B cell (primary cell): ENCODE measurements at regions of chr22 and their contacts with region 1.

Region 1: GRCh38 chr22:36775964-36776669 is at the start of gene IFT27:
- DNase-seq: peak; percentile 99
- ATAC-seq: peak; percentile 87
- H3K4me3 ChIP-seq: peak within 1 kb of the TSS; percentile 60 to 82 (median 73)
- H3K4me3 Mint-ChIP-seq: peak within 1 kb of the TSS; percentile 96
- H3K27ac ChIP-seq: peak within 1 kb of the TSS; percentile 80 to 91
- H3K27ac Mint-ChIP-seq: peak within 1 kb of the TSS; percentile 95
- H3K4me1 ChIP-seq: peaks cover 13 to 17% of the 10 kb centered on the region in 2 donors
- H3K4me1 Mint-ChIP-seq: peaks cover 16% of the 10 kb centered on the region
- H3K27me3 ChIP-seq: no peaks in the 10 kb centered on the region
- H3K27me3 Mint-ChIP-seq: no peaks in the 10 kb centered on the region
- CTCF ChIP-seq: no peak
- total RNA-seq, gene IFT27: 40.3 and 42.8 TPM in 2 replicates

Region 2: GRCh38 chr22:35299673-35300497 is 1476.2 kb before region 1 on chr22 and contains the start of gene TOM1:
- CTCF ChIA-PET with region 1: no interaction called
- POLR2A ChIA-PET with region 1: no interaction called
- intact Hi-C with region 1: loop called (anchors 5 kb)
- DNase-seq: peak; percentile 100
- ATAC-seq: peak; percentile 90
- H3K4me3 ChIP-seq: peak within 1 kb of the TSS; percentile 61 to 94 (median 73)
- H3K4me3 Mint-ChIP-seq: peak within 1 kb of the TSS; percentile 93
- H3K27ac ChIP-seq: peak within 1 kb of the TSS; percentile 96 to 97
- H3K27ac Mint-ChIP-seq: peak within 1 kb of the TSS; percentile 98
- H3K4me1 ChIP-seq: peaks cover 5 to 22% of the 10 kb centered on the region in 2 donors
- H3K4me1 Mint-ChIP-seq: peaks cover 26% of the 10 kb centered on the region
- H3K27me3 ChIP-seq: no peaks in the 10 kb centered on the region
- H3K27me3 Mint-ChIP-seq: no peaks in the 10 kb centered on the region
- CTCF ChIP-seq: no peak
- total RNA-seq, gene TOM1: 53.2 and 54.2 TPM in 2 replicates

Region 3: DNA sequence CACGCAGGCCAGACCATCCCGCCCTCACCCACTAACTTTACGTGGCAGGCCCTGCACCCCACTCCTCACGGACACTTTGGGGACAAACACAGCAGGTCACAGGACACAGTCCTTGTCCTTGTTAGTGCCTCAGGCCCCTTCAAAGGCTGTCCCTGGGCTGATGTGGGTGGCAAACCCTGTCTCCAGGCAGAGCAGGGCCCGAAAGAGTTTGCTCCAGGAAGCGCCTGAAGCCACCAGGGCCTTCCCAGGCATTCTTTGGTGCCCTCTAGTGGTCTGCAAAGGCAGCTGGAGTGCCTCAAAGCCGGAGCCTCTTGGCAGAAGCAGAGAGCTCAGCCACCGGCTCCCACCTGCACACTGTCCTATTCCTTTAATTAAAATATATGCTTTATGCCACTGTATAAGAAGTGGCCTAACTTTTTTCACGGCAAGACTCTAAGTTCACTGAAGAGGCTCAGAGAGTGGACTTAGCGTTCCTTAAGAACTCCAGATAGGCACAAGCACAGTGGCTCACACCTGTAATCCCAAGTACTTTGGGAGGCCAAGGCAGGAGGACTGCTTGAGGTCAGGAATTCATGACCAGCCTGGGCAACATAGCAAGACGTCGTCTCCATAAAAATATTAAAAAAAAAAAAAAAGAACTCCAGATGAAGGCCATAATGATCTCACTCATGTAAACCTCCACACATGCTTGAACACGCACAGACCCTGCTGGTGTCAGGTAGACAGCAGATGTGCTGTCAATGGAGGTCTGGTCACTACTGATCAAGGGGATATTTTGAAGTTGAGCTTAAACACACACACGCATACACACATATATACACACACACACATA is 305.7 kb before region 1 on chr22:
- CTCF ChIA-PET with region 1: no interaction called
- POLR2A ChIA-PET with region 1: no interaction called
- intact Hi-C with region 1: no loop called
- DNase-seq: peak; percentile 88
- ATAC-seq: peak; percentile 93
- H3K4me3 ChIP-seq: no peak overlapping the region
- H3K4me3 Mint-ChIP-seq: no peak overlapping the region
- H3K27ac ChIP-seq: no peak overlapping the region
- H3K27ac Mint-ChIP-seq: peak overlapping the region; percentile 72
- H3K4me1 ChIP-seq: peaks cover 6 to 17% of the 10 kb centered on the region in 2 donors
- H3K4me1 Mint-ChIP-seq: peaks cover 14% of the 10 kb centered on the region
- H3K27me3 ChIP-seq: no peaks in the 10 kb centered on the region
- H3K27me3 Mint-ChIP-seq: no peaks in the 10 kb centered on the region
- CTCF ChIP-seq: peak; percentile 96

Region 4: GRCh38 chr22:36528795-36529751 is 247.0 kb before region 1 on chr22 and contains the start of gene EIF3D:
- CTCF ChIA-PET with region 1: interaction called, 3 read pairs
- POLR2A ChIA-PET with region 1: interaction called, 6 read pairs
- intact Hi-C with region 1: loop called (anchors 1 kb)
- DNase-seq: peak; percentile 100
- ATAC-seq: peak; percentile 92
- H3K4me3 ChIP-seq: peak within 1 kb of the TSS; percentile 80 to 97 (median 88)
- H3K4me3 Mint-ChIP-seq: peak within 1 kb of the TSS; percentile 98
- H3K27ac ChIP-seq: peak within 1 kb of the TSS; percentile 88 to 93
- H3K27ac Mint-ChIP-seq: peak within 1 kb of the TSS; percentile 98
- H3K4me1 ChIP-seq: peaks cover 13 to 24% of the 10 kb centered on the region in 2 donors
- H3K4me1 Mint-ChIP-seq: peaks cover 28% of the 10 kb centered on the region
- H3K27me3 ChIP-seq: no peaks in the 10 kb centered on the region
- H3K27me3 Mint-ChIP-seq: no peaks in the 10 kb centered on the region
- CTCF ChIP-seq: no peak
- total RNA-seq, gene EIF3D: 257 and 274 TPM in 2 replicates

Region 5: DNA sequence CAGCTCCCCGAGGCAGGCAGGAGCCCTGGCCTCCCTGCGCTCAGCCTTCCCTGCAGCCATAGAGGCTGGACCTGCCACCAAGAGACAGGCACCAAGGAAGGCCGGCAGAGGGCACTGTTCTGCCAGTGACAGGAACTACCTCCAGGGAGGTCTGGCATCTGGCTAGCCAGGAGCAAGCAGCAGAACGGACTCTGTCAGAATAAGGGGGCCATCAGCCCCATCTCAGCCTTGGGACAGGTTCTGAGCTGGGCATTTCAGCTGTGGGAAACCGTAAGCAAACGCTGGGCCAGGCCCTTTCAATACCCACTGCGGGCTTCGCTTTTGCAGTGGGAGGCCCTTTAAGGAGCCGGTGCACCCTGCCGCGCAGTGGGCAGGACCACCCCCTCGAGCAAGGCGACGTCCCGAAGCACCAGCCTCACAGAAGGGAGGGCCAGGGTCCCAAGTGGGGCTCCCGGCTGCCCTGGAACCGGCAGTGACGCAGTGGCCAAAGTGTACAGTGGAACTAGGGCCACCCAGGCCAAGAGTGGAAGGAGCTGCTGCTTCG is 18.4 kb before region 1 on chr22:
- CTCF ChIA-PET with region 1: interaction called, 27 read pairs
- POLR2A ChIA-PET with region 1: interaction called, 4 read pairs
- intact Hi-C with region 1: no loop called
- DNase-seq: peak; percentile 77
- ATAC-seq: peak; percentile 93
- H3K4me3 ChIP-seq: no peak overlapping the region
- H3K4me3 Mint-ChIP-seq: no peak overlapping the region
- H3K27ac ChIP-seq: no peak overlapping the region
- H3K27ac Mint-ChIP-seq: no peak overlapping the region
- H3K4me1 ChIP-seq: no peaks in the 10 kb centered on the region
- H3K4me1 Mint-ChIP-seq: no peaks in the 10 kb centered on the region
- H3K27me3 ChIP-seq: peaks cover 0 to 20% (median 1%) of the 10 kb centered on the region in 4 experiments
- H3K27me3 Mint-ChIP-seq: peaks cover 18% of the 10 kb centered on the region
- CTCF ChIP-seq: peak; percentile 84

Region 6: GRCh38 chr22:36828815-36829214 is 52.7 kb after region 1 on chr22:
- CTCF ChIA-PET with region 1: no interaction called
- POLR2A ChIA-PET with region 1: no interaction called
- intact Hi-C with region 1: no loop called
- DNase-seq: no peak
- ATAC-seq: no peak
- H3K4me3 ChIP-seq: no peak overlapping the region
- H3K4me3 Mint-ChIP-seq: no peak overlapping the region
- H3K27ac ChIP-seq: no peak overlapping the region
- H3K27ac Mint-ChIP-seq: no peak overlapping the region
- H3K4me1 ChIP-seq: peaks cover 10 to 14% of the 10 kb centered on the region in 2 donors
- H3K4me1 Mint-ChIP-seq: peaks cover 15% of the 10 kb centered on the region
- H3K27me3 ChIP-seq: peaks cover 0 to 21% (median 10%) of the 10 kb centered on the region in 4 experiments
- H3K27me3 Mint-ChIP-seq: peaks cover 31% of the 10 kb centered on the region
- CTCF ChIP-seq: no peak

Region 7: DNA sequence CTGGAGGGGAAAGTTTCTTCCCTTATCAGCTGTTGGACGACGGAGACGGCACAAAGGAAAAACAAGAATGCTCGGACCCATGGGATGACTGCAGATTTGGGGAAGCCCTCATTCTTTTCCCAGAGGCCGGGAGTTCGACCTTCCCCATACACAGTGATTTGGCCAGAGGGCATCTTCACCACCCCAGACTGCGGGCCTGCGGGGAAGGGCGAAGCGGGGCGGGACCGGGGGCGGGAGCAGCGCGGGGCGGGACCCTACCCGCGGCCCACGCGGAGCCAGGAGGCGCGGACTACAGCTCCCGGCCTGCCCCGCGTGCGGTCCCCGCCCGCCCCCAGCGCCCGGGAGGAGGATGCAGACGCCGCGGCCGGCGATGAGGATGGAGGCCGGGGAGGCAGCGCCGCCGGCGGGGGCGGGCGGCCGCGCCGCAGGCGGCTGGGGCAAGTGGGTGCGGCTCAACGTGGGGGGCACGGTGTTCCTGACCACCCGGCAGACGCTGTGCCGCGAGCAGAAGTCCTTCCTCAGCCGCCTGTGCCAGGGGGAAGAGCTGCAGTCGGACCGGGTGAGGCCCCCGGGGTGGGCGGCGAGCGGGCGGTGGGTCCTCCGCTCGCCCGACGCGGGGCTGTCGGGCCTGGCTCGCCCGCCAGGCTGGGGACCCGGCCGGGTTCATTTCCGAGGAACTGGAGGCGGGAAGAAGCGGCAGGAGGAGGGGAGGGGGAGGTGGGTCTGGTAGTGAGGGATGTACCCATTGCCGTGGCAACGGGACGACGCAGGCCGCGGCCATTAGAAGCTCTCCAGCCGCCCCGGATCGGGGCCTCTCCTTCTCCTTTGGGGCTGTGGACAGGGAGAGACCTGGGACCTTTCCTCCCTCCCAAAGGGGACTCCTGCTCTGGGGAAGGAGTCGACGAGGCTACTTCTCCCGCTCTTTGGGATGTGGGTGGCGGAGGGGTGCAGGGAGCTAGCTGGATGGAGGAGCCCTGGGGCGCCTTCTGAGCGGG is 275.6 kb after region 1 on chr22 and contains the start of gene KCTD17:
- CTCF ChIA-PET with region 1: no interaction called
- POLR2A ChIA-PET with region 1: no interaction called
- intact Hi-C with region 1: loop called (anchors 1 kb)
- DNase-seq: peak; percentile 78
- ATAC-seq: peak; percentile 100
- H3K4me3 ChIP-seq: peak within 1 kb of the TSS in 4 of 5 experiments; percentile 40 to 71 (median 60)
- H3K4me3 Mint-ChIP-seq: peak within 1 kb of the TSS; percentile 85
- H3K27ac ChIP-seq: peak within 1 kb of the TSS in 1 of 2 donors; percentile 36
- H3K27ac Mint-ChIP-seq: peak within 1 kb of the TSS; percentile 39
- H3K4me1 ChIP-seq: peaks cover 7 to 18% of the 10 kb centered on the region in 2 donors
- H3K4me1 Mint-ChIP-seq: peaks cover 12% of the 10 kb centered on the region
- H3K27me3 ChIP-seq: no peaks in the 10 kb centered on the region
- H3K27me3 Mint-ChIP-seq: no peaks in the 10 kb centered on the region
- CTCF ChIP-seq: no peak
- total RNA-seq, gene KCTD17: 40.0 and 41.3 TPM in 2 replicates

Region 8: GRCh38 chr22:37486224-37486845 is 710.2 kb after region 1 on chr22 and contains the start of gene MFNG:
- CTCF ChIA-PET with region 1: no interaction called
- POLR2A ChIA-PET with region 1: no interaction called
- intact Hi-C with region 1: loop called (anchors 10 kb)
- DNase-seq: peak; percentile 86
- ATAC-seq: peak; percentile 78
- H3K4me3 ChIP-seq: peak within 1 kb of the TSS; percentile 63 to 91 (median 80)
- H3K4me3 Mint-ChIP-seq: peak within 1 kb of the TSS; percentile 98
- H3K27ac ChIP-seq: peak within 1 kb of the TSS; percentile 70 to 93
- H3K27ac Mint-ChIP-seq: peak within 1 kb of the TSS; percentile 98
- H3K4me1 ChIP-seq: peaks cover 24 to 47% of the 10 kb centered on the region in 2 donors
- H3K4me1 Mint-ChIP-seq: peaks cover 55% of the 10 kb centered on the region
- H3K27me3 ChIP-seq: no peaks in the 10 kb centered on the region
- H3K27me3 Mint-ChIP-seq: no peaks in the 10 kb centered on the region
- CTCF ChIP-seq: no peak
- total RNA-seq, gene MFNG: 95.9 and 109 TPM in 2 replicates